ENCODE measurements at regions of chr2 and their contacts with region 1.

Region 1: GRCh38 chr2:56565143-56565542 is 381.4 kb downstream of the CCDC85A start:
- DNase-seq: peak; percentile 30
- H3K4me3 Mint-ChIP-seq: no peak overlapping the region
- H3K27ac Mint-ChIP-seq: no peak overlapping the region
- H3K4me1 Mint-ChIP-seq: no peaks in the 10 kb centered on the region
- H3K27me3 Mint-ChIP-seq: no peaks in the 10 kb centered on the region
- CTCF ChIP-seq: no peak

Region 2: DNA sequence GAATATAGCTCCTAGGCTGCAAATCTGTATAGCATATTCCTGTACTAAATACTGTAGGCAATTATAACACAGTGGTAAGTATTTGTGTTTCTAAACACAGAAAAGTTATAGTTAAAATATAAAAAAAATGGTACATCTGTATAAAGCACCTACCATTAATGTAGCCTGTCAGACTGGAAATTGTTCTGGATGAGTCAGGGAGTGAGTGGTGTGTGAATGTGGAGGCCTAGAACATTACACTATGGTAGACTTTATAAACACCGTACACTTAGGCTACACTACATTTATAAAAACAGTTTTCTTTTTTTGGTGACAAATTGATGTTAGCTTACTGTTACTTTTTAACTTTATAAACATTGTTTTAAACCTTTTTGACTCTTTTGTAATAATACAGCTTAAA is 155.0 kb before region 1 on chr2:
- CTCF ChIA-PET with region 1: no interaction called
- POLR2A ChIA-PET with region 1: no interaction called
- intact Hi-C with region 1: loop called (anchors 10 kb)
- DNase-seq: no peak
- H3K4me3 Mint-ChIP-seq: no peak overlapping the region
- H3K27ac Mint-ChIP-seq: no peak overlapping the region
- H3K4me1 Mint-ChIP-seq: no peaks in the 10 kb centered on the region
- H3K27me3 Mint-ChIP-seq: no peaks in the 10 kb centered on the region
- CTCF ChIP-seq: no peak

Region 3: GRCh38 chr2:57497489-57498096 is 932.5 kb after region 1 on chr2:
- CTCF ChIA-PET with region 1: no interaction called
- POLR2A ChIA-PET with region 1: no interaction called
- intact Hi-C with region 1: no loop called
- DNase-seq: peak; percentile 68
- H3K4me3 Mint-ChIP-seq: no peak overlapping the region
- H3K27ac Mint-ChIP-seq: no peak overlapping the region
- H3K4me1 Mint-ChIP-seq: no peaks in the 10 kb centered on the region
- H3K27me3 Mint-ChIP-seq: no peaks in the 10 kb centered on the region
- CTCF ChIP-seq: peak; percentile 82

Measured in MCF 10A (cell line).